ENCODE measurements at regions of chr20 and their contacts with region 1.

Region 1: DNA sequence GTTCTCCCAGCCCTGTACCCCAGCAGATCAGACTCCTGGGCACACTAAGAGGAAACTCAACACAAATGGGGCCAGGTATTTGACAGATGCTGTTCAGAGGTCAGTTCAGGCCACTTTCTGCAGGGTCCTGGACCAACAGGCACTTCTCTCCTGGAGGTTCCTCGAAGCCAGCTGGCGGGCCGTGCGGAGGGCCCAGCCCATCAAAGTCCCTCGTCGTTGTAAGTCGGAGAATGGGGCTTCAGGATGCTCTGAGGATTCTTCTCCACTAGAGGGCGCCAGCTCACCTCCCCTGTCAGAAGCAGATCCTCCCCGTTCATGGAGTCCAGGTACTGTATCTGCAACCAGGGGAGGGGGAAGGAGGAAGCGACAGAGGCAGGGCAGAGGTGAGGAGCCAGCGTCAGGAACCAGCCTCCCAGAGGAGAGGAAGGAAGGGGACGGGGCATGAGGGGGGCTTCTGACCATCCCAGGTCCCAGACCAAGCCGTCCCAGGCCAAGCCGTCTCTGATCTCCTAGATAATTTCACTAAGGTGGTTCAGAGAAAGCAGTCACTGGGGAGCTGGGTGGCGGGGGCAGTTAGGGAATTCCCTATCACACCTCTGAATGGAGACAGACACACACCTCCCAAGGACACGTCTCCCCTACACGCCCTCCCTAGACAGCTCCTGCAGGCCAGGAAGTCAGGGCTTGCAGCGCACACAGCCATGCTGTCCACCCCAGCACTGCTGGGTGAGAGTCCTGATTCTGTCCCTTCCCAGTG is 11.7 kb upstream of the FAM83C start:
- DNase-seq: peak; percentile 89
- H3K4me3 ChIP-seq: no peak overlapping the region
- H3K27ac ChIP-seq: no peak overlapping the region
- H3K4me1 ChIP-seq: peaks cover 5% of the 10 kb centered on the region
- CTCF ChIP-seq: peak; percentile 98

Region 2: DNA sequence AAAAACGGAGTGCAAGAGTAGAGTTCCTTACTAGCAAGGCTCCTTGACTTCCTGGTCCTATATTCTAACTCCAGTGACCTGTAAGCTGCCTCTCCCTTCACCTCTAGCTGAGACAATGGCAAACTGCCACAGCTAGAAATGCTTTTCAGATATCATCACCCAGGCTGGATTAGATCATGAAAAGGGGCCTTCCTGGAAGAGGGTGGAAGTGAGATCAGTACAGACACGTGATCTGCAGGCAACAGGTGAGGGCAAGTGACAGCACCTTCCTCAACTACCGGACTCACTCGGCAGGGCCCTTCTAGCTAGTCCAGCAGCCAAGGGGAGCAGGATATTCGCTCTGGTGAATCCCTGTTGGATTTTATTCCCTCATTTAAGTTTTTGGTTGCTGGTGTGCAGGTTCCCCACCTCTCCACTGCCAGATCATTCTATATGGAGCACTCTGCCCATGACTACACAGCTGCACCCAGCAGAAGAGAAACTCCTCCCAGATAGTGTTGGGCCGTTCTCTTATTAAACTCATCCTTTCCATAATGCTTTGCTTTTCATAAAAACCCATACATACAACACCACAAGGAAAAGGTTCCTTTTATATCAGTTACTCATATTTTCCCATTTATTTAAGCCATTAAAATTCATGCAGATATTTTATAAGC is 14.7 kb after region 1 on chr20:
- CTCF ChIA-PET with region 1: no interaction called
- POLR2A ChIA-PET with region 1: no interaction called
- intact Hi-C with region 1: no loop called
- DNase-seq: no peak
- H3K4me3 ChIP-seq: no peak overlapping the region
- H3K27ac ChIP-seq: no peak overlapping the region
- H3K4me1 ChIP-seq: no peaks in the 10 kb centered on the region
- CTCF ChIP-seq: no peak

Region 3: GRCh38 chr20:35329435-35330139 is 25.7 kb after region 1 on chr20:
- CTCF ChIA-PET with region 1: no interaction called
- POLR2A ChIA-PET with region 1: interaction called, 5 read pairs
- intact Hi-C with region 1: loop called (anchors 2 kb)
- DNase-seq: peak; percentile 61
- H3K4me3 ChIP-seq: no peak overlapping the region
- H3K27ac ChIP-seq: no peak overlapping the region
- H3K4me1 ChIP-seq: no peaks in the 10 kb centered on the region
- CTCF ChIP-seq: peak; percentile 90

Region 4: GRCh38 chr20:35443003-35443402 is 139.1 kb after region 1 on chr20:
- CTCF ChIA-PET with region 1: interaction called, 9 read pairs
- POLR2A ChIA-PET with region 1: no interaction called
- intact Hi-C with region 1: loop called (anchors 1 kb)
- DNase-seq: no peak
- H3K4me3 ChIP-seq: no peak overlapping the region
- H3K27ac ChIP-seq: no peak overlapping the region
- H3K4me1 ChIP-seq: peaks cover 7% of the 10 kb centered on the region
- CTCF ChIP-seq: no peak

Measured in OCI-LY7 (cell line).